ENCODE measurements at regions of chr1 and their contacts with region 1.

Region 1: DNA sequence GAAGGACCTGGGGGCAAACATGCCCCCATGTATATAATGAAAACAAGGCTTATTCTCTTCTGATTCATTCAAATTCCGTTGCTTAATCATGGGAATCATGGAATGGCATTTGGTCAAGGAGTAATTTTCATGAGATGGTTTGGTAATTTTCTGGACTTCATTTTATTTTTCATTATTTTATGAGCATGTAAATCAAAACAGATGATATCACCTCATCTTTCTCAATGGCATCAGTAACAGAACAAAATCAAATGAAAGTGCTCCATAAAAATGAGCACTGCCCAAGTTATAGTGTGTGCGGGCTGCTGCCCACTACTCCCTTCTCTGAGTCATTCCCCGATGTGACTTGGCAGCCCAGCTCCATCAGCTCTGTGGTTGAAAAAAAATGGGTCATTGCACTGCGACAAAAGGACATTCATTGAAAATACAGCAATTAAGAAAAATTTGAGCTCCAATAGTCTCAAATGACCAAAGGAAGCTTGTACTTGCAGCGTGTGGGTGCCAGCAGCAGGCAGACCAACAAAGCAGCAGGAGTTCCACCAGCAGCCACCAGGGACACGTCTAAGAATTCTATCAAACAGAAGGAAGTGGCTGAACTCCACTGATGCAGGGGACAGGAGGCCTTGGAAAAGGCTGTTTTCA is 84.3 kb upstream of the VAV3 start:
- DNase-seq: peak; percentile 67
- ATAC-seq: peak; percentile 79
- H3K4me3 ChIP-seq: no peak overlapping the region
- H3K27ac ChIP-seq: no peak overlapping the region
- H3K4me1 ChIP-seq: peaks cover 27% of the 10 kb centered on the region
- H3K27me3 ChIP-seq: no peaks in the 10 kb centered on the region
- CTCF ChIP-seq: peak; percentile 65

Region 2: GRCh38 chr1:108067884-108068538 is 18.7 kb after region 1 on chr1:
- CTCF ChIA-PET with region 1: no interaction called
- POLR2A ChIA-PET with region 1: no interaction called
- intact Hi-C with region 1: no loop called
- DNase-seq: peak; percentile 41
- ATAC-seq: no peak
- H3K4me3 ChIP-seq: no peak overlapping the region
- H3K27ac ChIP-seq: no peak overlapping the region
- H3K4me1 ChIP-seq: no peaks in the 10 kb centered on the region
- H3K27me3 ChIP-seq: no peaks in the 10 kb centered on the region
- CTCF ChIP-seq: no peak

Region 3: GRCh38 chr1:108079440-108080025 is 30.2 kb after region 1 on chr1:
- CTCF ChIA-PET with region 1: no interaction called
- POLR2A ChIA-PET with region 1: no interaction called
- intact Hi-C with region 1: loop called (anchors 5 kb)
- DNase-seq: no peak
- ATAC-seq: no peak
- H3K4me3 ChIP-seq: no peak overlapping the region
- H3K27ac ChIP-seq: no peak overlapping the region
- H3K4me1 ChIP-seq: peaks cover 12% of the 10 kb centered on the region
- H3K27me3 ChIP-seq: no peaks in the 10 kb centered on the region
- CTCF ChIP-seq: no peak

Measured in PC-3 (cell line).